ENCODE measurements at regions of chr9 and their contacts with region 1.

Region 1: DNA sequence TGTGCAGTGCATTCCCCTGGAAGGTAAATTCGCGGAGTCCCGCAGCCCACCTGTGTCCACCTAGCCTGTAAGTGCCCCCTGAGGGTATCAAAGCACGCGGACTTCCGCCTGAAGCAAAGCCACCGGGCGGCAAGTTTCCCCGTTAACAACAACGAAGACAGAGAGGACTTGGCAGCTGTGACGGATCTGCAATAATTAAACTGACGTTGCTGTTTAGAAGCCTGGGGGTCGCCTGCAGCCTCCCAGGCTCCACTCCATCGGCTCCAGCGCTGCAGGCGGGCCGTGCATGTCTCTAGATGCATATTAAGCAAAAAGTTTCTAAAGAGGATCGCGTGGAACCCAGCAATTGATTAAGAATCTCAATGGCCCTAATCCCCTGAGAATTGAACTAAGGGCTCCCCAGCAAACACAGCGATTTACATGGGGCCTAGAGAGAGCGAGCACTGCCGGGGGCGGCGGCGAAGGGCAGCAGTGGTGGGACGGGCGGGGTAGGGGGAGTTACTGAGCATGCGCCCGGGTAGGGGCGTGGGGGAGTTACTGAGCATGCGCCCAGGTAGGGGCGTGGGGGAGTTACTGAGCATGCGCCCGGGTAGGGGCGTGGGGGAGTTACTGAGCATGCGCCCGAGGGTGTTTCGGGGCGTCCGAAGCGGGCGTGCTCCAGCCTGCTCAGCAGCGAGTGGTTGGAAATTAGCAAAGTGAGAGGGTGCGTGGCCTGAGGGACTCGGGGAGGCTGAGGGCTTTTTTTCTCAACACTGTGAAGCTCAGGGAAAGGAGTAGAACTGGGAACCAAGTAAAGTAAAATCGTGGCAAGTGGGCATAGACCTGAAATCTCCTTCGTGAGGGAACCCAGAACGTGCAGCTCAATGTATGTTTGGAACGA is 255.2 kb downstream of the DOCK8 start:
- DNase-seq: peak; percentile 97
- H3K4me3 Mint-ChIP-seq: peak overlapping the region; percentile 98
- H3K27ac Mint-ChIP-seq: peak overlapping the region; percentile 96
- H3K4me1 Mint-ChIP-seq: peaks cover 26% of the 10 kb centered on the region
- H3K27me3 Mint-ChIP-seq: no peaks in the 10 kb centered on the region

Region 2: GRCh38 chr9:346111-346571 is 123.8 kb before region 1 on chr9:
- intact Hi-C with region 1: no loop called
- DNase-seq: no peak
- H3K4me3 Mint-ChIP-seq: no peak overlapping the region
- H3K27ac Mint-ChIP-seq: no peak overlapping the region
- H3K4me1 Mint-ChIP-seq: peaks cover 14% of the 10 kb centered on the region
- H3K27me3 Mint-ChIP-seq: no peaks in the 10 kb centered on the region

Region 3: GRCh38 chr9:447230-448025 is 22.5 kb before region 1 on chr9:
- intact Hi-C with region 1: loop called (anchors 1 kb)
- DNase-seq: peak; percentile 92
- H3K4me3 Mint-ChIP-seq: peak overlapping the region; percentile 53
- H3K27ac Mint-ChIP-seq: peak overlapping the region; percentile 77
- H3K4me1 Mint-ChIP-seq: peaks cover 31% of the 10 kb centered on the region
- H3K27me3 Mint-ChIP-seq: no peaks in the 10 kb centered on the region

Region 4: DNA sequence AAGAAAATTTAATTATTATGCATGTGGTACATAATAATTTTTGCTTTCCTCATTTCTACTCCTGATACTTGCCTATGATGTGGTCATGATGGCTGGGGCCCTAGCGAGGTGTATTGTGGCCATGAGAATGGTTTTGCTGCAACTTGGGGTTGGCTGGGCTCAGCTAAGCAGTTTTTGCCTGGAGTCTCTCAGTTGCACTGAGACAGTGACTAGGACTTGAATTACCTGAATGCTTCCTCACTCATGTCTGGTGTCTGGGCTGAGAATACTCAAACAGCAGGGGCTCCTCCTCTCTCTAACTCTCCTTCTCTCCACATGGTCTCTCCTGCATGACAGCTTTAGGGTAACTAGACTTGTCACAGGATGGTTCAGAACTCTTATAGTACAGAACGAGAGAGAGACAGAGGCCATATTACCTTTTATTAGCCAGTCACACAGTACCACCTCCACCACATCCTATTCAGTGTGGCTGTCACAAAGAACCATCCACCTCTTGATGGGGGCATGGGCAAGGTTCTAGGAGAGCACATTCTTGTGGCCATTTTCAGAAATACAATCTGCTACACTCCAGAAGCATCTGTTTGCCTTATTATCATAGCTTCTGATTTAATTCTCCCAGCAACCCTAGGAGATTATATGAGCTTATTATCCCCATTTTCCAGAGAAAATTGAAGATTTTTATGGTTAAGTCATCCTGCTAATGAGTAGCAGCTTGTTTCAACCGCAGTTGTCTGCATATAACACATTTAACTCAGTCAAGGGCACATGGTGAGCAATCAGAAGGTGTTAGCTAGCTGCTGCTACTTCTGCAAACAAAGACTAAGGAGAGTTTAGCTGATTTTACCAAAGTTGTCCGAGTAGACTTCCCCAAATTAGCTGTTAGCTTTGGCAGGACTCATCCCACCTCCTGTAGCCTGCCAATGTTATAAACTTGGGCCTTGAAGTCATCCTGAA is 10.1 kb before region 1 on chr9:
- intact Hi-C with region 1: loop called (anchors 1 kb)
- DNase-seq: peak; percentile 70
- H3K4me3 Mint-ChIP-seq: peak overlapping the region; percentile 30
- H3K27ac Mint-ChIP-seq: peak overlapping the region; percentile 77
- H3K4me1 Mint-ChIP-seq: peaks cover 23% of the 10 kb centered on the region
- H3K27me3 Mint-ChIP-seq: no peaks in the 10 kb centered on the region

Region 5: DNA sequence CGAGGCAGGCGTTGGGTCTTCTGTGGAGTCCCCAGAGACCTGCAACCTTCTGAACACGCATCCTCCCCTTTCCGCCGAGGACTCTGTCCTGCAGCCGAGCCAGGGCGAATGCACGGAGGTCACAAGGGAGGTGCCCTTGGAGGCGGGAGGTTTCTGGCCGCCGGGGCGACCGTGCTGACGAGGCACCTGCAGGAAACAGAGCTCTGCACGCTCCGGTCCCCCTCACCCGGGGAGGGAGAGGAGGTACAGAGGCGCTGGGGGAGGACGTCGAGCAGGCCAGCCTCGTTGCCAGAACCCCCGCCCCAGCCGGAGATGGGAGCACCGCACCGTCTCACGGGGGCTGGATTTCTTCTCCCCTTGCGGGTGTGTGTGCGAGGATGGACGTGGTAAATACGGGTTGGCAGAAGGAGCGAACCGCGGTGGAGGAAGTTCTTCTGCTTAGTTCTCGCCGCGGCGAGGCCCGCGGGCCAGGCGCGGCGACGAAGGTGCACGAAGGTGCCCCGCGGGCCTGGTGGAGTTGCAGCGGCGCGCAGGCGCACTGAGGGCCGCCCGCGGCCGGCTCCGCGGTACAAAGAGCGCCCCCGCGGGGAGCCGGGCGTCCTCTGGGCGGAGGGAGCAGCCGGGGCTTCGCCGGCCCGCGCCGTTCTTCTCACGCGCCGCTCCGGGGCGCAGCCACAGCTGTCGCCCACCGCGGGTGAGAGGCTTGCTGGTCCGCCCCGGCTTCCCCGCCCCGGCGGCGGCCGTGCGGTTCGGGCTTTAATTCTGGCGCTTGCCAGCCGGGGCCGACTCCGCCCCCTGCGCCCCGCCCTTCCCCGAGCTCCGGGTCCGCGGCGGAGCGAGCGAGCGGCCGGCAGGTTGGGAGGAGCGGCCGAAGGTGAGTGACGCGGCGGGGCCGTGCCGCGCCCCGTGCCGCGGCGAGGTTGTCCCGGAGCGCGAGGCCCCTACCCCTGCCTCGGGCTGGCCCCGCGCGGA is 34.3 kb after region 1 on chr9:
- intact Hi-C with region 1: loop called (anchors 1 kb)
- DNase-seq: peak; percentile 94
- H3K4me3 Mint-ChIP-seq: peak within 1 kb of the TSS; percentile 81
- H3K27ac Mint-ChIP-seq: peak within 1 kb of the TSS; percentile 55
- H3K4me1 Mint-ChIP-seq: peaks cover 8% of the 10 kb centered on the region
- H3K27me3 Mint-ChIP-seq: peaks cover 52% of the 10 kb centered on the region